ENCODE measurements at regions of chr2 and their contacts with region 1.

Region 1: GRCh38 chr2:30711646-30712085 is 95.6 kb downstream of the CAPN13 start:
- DNase-seq: peak; percentile 83 to 96 (median 91)
- H3K4me3 ChIP-seq: no peak overlapping the region
- H3K27ac ChIP-seq: no peak overlapping the region
- H3K4me1 ChIP-seq: no peaks in the 10 kb centered on the region
- H3K27me3 ChIP-seq: peaks cover under 1% of the 10 kb centered on the region
- CTCF ChIP-seq: peak; percentile 96 to 100 (median 100)
- POLR2A ChIP-seq: no peak

Region 2: DNA sequence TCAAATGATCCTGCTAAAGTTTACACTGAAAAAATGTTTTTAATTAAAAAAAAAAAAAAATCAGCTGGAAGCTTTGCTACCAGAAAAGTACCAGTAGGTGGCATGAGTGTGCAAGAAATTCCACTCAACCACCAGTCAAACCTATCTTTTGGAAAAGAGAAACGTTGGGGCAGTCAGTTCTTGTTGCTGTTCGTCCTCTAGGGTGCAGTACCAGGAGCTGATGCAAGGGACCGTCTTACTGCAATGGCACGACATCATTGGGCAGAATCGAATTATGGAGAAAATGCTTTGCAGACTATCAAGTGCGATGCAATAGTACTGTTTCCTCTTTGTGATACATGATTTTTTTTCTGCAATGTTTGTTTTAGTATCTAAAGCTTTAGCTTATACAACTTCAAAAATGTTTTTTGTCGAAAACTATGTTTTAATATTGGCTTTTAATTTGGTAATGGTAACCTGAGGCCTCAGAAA is 546.6 kb before region 1 on chr2:
- intact Hi-C with region 1: loop called (anchors 5 to 10 kb)
- DNase-seq: peak; percentile 55 to 86 (median 78)
- H3K4me3 ChIP-seq: no peak overlapping the region
- H3K27ac ChIP-seq: peak overlapping the region in 1 of 5 donors; percentile 0
- H3K4me1 ChIP-seq: peaks cover 0 to 9% of the 10 kb centered on the region in 2 donors
- H3K27me3 ChIP-seq: no peaks in the 10 kb centered on the region
- CTCF ChIP-seq: peak; percentile 75 to 97 (median 88)
- POLR2A ChIP-seq: no peak

Region 3: DNA sequence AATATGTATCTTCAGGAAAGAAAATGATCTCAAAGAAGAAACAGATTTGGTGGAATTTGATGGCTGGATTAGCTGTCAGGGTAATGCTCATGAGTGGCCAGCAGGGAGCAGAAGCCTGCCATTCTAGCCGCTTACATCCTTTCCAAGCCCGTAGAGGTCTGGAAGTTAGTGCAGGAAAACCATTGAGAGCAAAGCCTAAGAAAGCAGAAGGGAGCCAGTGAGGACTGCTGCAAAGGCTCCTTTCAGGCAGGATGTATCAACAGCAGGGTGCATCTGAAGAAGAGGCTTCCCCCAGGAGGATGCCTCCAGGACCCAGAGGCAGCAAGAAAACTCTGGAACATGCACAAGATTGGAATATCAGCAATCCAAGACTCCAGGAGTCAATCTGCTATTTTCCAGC is 503.2 kb before region 1 on chr2:
- intact Hi-C with region 1: loop called (anchors 2 to 5 kb)
- DNase-seq: peak; percentile 60 to 87 (median 77)
- H3K4me3 ChIP-seq: no peak overlapping the region
- H3K27ac ChIP-seq: no peak overlapping the region
- H3K4me1 ChIP-seq: no peaks in the 10 kb centered on the region
- H3K27me3 ChIP-seq: no peaks in the 10 kb centered on the region
- CTCF ChIP-seq: peak; percentile 87 to 96 (median 93)
- POLR2A ChIP-seq: no peak

Region 4: DNA sequence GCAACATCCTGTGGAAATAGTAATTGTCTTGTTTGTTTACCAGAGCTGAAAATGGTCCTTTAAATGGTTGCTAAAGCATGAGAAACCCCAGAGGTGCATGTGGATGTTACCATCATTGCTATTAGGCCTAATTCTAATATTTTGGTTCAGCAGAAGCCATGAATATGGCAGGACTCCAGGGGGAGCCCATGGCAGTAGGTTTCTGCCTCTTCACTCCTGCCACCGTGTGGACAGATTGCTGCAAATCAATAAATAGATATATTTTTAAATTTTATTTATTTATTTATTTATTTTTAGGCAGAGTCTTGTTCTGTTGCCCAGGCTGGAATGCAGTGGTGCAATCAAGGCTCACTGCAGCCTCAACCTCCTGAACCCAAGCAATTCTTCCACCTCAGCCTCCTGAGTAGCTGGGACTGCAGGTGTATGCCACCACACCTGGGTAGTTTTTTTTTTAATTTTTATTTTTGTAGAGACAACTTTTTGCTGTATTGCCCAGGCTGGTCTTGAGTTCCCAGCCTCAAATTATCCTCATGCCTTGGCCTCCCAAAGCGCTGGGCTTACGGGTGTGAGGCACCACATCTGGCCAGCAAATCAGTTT is 150.5 kb after region 1 on chr2:
- intact Hi-C with region 1: loop called (anchors 10 kb)
- DNase-seq: peak; percentile 47 to 89 (median 73)
- H3K4me3 ChIP-seq: no peak overlapping the region
- H3K27ac ChIP-seq: no peak overlapping the region
- H3K4me1 ChIP-seq: no peaks in the 10 kb centered on the region
- H3K27me3 ChIP-seq: no peaks in the 10 kb centered on the region
- CTCF ChIP-seq: peak; percentile 39 to 69 (median 58)
- POLR2A ChIP-seq: no peak

Region 5: DNA sequence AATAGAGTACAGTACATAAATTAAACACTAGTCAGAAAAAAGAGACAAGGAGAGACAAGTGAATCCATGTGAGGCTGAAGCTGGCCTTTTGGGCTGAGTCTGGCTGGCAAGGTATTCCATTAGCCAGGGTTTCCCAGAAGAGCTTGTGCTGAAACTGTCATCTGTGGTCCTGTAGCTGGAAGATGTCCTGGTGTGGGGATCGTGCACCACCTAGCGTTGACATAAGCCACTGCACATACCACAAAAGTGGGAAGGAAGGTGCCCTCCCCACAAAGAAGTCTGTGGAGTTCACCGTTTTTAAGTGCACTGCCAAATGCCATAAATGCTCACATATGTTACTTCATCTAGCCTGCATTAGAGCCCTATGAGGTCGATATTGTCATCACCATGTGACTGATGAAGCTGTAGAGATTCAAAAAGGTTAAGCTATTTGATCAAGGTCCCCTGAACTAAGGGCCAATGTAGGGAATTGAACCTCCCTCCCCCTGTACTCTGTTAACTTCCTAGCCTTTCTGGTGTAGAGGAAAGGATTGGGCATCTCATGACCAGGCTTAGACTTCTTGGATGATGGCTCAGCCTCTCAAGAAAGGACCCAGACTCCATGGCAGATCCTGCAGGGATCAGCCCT is 458.5 kb after region 1 on chr2:
- intact Hi-C with region 1: loop called (anchors 2 to 5 kb)
- DNase-seq: peak; percentile 55 to 84 (median 67)
- H3K4me3 ChIP-seq: no peak overlapping the region
- H3K27ac ChIP-seq: no peak overlapping the region
- H3K4me1 ChIP-seq: no peaks in the 10 kb centered on the region
- H3K27me3 ChIP-seq: no peaks in the 10 kb centered on the region
- CTCF ChIP-seq: peak; percentile 83 to 95 (median 90)
- POLR2A ChIP-seq: no peak

Region 6: DNA sequence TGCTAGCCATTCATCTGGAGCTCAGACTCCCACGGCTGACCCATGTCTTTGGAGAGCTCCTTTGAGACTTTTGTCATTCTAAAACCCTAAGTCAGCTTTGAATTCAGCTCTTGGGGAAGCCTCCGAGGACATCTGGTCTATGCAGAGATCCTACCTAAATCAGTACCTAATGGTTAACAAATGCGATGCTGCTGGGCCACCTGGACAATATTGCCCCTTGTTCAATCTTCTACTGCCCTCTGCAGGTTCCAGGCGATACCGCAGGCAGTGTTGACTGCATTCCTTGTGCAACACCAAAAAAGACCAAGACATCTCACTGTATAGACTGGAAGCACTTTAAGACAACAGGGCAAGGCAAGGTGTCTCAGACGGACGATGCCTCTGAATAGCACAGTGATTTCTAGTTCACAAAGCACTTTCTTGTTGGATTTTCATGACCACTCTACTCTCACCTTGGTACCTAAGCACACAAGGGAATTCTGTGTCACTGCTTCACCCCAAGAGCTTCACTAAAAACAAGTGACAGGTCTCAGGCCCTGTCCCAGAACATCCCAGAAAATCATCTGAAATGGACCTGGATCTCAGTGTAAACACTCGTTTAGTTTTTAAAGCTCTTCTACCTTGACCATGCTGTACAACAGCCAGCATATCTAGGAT is 622.0 kb after region 1 on chr2:
- intact Hi-C with region 1: loop called in 1 of 2 experiments (anchors 5 kb)
- DNase-seq: peak; percentile 65 to 93 (median 83)
- H3K4me3 ChIP-seq: no peak overlapping the region
- H3K27ac ChIP-seq: no peak overlapping the region
- H3K4me1 ChIP-seq: no peaks in the 10 kb centered on the region
- H3K27me3 ChIP-seq: no peaks in the 10 kb centered on the region
- CTCF ChIP-seq: peak; percentile 78 to 94 (median 92)
- POLR2A ChIP-seq: no peak

Measured in adrenal gland (tissue), 19 donors.